Ascending aorta (tissue), 2 donors: ENCODE measurements at regions of chr22 and their contacts with region 1.

Region 1: GRCh38 chr22:29603358-29604075 is at the start of gene NF2:
- DNase-seq: peak; percentile 97 to 99
- H3K4me3 ChIP-seq: peak within 1 kb of the TSS; percentile 78 to 92
- H3K27ac ChIP-seq: peak within 1 kb of the TSS; percentile 83 to 92
- H3K4me1 ChIP-seq: peaks cover 0 to 10% of the 10 kb centered on the region in 2 donors
- H3K27me3 ChIP-seq: no peaks in the 10 kb centered on the region
- CTCF ChIP-seq: no peak
- total RNA-seq, gene NF2: 37.3 TPM

Region 2: GRCh38 chr22:29487426-29487986 is 116.0 kb before region 1 on chr22:
- intact Hi-C with region 1: no loop called
- DNase-seq: no peak
- H3K4me3 ChIP-seq: no peak overlapping the region
- H3K27ac ChIP-seq: no peak overlapping the region
- H3K4me1 ChIP-seq: no peaks in the 10 kb centered on the region
- H3K27me3 ChIP-seq: no peaks in the 10 kb centered on the region
- CTCF ChIP-seq: no peak

Region 3: DNA sequence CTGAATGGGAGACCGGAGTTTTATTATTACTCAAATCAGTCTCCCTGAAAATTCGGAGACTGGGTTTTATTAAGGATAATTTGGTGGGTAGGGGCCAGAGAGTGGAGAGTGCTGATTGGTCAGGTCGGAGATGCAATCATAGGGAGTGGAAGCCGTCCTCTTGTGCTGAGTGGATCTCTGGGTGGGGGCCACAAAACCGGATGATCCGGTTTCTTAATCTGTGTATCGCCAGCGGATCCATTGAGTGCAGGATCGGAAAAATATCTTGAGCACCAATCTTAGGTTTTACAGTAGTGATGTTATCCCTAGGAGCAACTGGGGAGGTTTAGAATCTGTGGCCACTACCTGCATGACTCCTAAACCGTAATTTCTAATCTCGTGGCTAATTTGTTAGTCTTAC is 21.7 kb before region 1 on chr22:
- intact Hi-C with region 1: loop called (anchors 1 kb)
- DNase-seq: no peak
- H3K4me3 ChIP-seq: peak overlapping the region in 1 of 2 donors; percentile 79
- H3K27ac ChIP-seq: no peak overlapping the region
- H3K4me1 ChIP-seq: peaks cover 0 to 3% of the 10 kb centered on the region in 2 donors
- H3K27me3 ChIP-seq: no peaks in the 10 kb centered on the region
- CTCF ChIP-seq: no peak

Region 4: DNA sequence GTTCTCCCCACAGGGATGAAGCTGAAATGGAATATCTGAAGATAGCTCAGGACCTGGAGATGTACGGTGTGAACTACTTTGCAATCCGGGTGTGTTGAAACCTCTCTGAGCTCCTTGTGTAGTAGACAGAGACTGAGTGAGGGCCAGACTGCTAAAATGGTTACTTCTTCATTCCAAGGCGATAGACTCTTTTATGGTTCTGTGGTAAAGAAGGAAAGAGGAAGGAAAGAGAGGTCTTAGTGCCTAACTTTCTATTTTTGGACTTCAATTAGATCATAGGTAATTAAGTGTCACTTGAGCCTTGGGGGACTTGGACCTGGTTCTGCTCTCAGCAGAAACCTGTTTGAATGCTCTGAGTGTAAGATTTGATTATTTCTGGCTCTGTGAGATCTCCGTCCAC is 54.7 kb after region 1 on chr22:
- intact Hi-C with region 1: no loop called
- DNase-seq: no peak
- H3K4me3 ChIP-seq: no peak overlapping the region
- H3K27ac ChIP-seq: no peak overlapping the region
- H3K4me1 ChIP-seq: no peaks in the 10 kb centered on the region
- H3K27me3 ChIP-seq: no peaks in the 10 kb centered on the region
- CTCF ChIP-seq: no peak

Region 5: DNA sequence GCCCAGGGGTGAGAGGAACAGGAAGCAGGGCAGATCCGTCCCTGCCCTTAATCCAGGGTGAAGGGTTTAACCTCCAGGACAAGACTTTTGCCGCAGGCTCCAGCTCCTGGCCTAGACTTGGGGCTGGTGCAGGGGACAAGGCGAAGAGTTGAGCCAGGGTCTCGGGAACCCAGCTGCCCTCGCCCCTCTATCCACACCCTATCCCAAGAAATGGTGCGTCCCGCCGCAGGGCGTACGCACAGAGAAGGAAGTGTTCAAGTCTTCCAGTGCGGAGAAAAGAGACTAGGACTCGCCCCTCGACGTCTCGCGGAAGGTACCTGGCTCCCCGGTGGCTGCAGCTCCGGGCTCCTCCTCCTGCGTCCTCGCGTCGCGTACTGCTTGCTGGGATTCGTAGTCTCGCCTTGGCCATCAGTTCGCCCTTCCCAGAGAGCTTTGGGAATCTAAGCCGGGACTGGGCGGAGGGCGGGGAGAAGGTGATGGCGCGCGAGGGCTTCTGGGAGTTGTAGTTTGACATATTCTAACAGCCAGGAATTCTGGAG is 163.2 kb after region 1 on chr22 and contains the start of gene ZMAT5:
- intact Hi-C with region 1: loop called (anchors 1 kb)
- DNase-seq: peak; percentile 82 to 96
- H3K4me3 ChIP-seq: peak within 1 kb of the TSS; percentile 81 to 91
- H3K27ac ChIP-seq: peak within 1 kb of the TSS; percentile 70 to 78
- H3K4me1 ChIP-seq: peaks cover 9 to 17% of the 10 kb centered on the region in 2 donors
- H3K27me3 ChIP-seq: no peaks in the 10 kb centered on the region
- CTCF ChIP-seq: no peak
- total RNA-seq, gene ZMAT5: 59.3 TPM

Region 6: GRCh38 chr22:29883045-29883774 is 279.7 kb after region 1 on chr22 and contains the start of gene MTMR3:
- intact Hi-C with region 1: loop called (anchors 5 kb)
- DNase-seq: peak; percentile 76 to 96
- H3K4me3 ChIP-seq: peak within 1 kb of the TSS; percentile 79 to 82
- H3K27ac ChIP-seq: peak within 1 kb of the TSS; percentile 89 to 93
- H3K4me1 ChIP-seq: peaks cover 0 to 7% of the 10 kb centered on the region in 2 donors
- H3K27me3 ChIP-seq: no peaks in the 10 kb centered on the region
- CTCF ChIP-seq: peak; percentile 47 to 64 (median 61)
- total RNA-seq, gene MTMR3: 26.1 TPM